HepG2 (cell line): ENCODE measurements at regions of chr7 and their contacts with region 1.

Region 1: DNA sequence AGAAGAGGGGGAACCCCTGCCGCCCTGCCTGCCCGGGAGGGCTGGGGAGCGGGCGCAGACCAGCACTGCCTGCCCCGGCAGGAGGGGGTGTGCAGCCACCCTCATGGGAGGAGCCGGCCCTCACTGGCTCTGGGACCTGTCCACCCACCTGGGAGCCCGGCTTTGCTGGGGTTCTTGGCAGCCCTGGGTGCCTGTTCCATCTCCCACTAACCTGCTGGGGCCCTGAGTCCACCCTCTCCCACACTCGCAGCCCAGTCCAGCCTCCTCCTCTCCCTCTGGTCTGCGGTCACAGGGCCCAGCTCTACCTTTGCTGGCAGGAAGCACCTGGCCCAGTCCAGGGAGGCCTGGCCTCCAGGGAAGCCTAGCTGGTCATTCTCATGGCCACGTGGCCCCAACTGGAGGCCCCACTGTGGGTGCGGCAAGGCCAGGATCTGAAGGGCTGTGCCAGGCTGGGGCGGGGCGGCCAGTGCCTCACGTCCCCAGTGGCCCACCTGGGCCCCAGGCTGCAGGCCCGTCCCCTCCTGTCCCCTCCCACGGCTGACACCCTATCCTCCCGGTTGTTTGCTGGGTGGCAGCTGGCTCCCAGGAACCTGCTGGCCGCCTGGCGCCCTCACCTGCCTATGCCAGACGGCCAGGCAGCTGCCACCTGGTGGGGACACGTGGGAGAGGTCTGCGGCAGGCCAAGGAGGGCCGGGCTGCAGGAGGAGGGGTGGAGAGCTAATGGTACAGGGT is at the start of gene TMEM184A:
- DNase-seq: peak; percentile 89
- ATAC-seq: peak; percentile 76
- H3K4me3 ChIP-seq: peak within 1 kb of the TSS; percentile 35 to 72 (median 55); a peak in 5 of 6 replicates
- H3K27ac ChIP-seq: peak within 1 kb of the TSS; percentile 89
- H3K4me1 ChIP-seq: peaks cover 54% of the 10 kb centered on the region
- H3K27me3 ChIP-seq: peaks cover 3 to 7% of the 10 kb centered on the region in 2 experiments; a peak in 2 of 5 replicates
- CTCF ChIP-seq: peak; percentile 97
- EP300 ChIP-seq: 0 out of 4 replicates have a peak, but pooled peaks of 1 of the 2 experiments have one; percentile 14
- POLR2A ChIP-seq: peak in 1 of 2 experiments; percentile 57; a peak in 2 of 4 replicates
- RAD21 ChIP-seq: peak; percentile 92
- total RNA-seq, gene TMEM184A: 3.1 and 9.5 TPM in 2 replicates

Region 2: GRCh38 chr7:1459522-1459892 is 96.5 kb before region 1 on chr7:
- CTCF ChIA-PET with region 1: no interaction called
- POLR2A ChIA-PET with region 1: interaction called, 10 read pairs
- in situ Hi-C with region 1: no loop called
- intact Hi-C with region 1: no loop called
- DNase-seq: peak; percentile 94
- ATAC-seq: peak; percentile 70
- H3K4me3 ChIP-seq: peak overlapping the region; percentile 67 to 86 (median 86); a peak in 5 of 6 replicates
- H3K27ac ChIP-seq: peak overlapping the region; percentile 64
- H3K4me1 ChIP-seq: peaks cover 73% of the 10 kb centered on the region
- H3K27me3 ChIP-seq: no peaks in the 10 kb centered on the region
- CTCF ChIP-seq: no peak
- EP300 ChIP-seq: no peak
- POLR2A ChIP-seq: no peak
- RAD21 ChIP-seq: no peak

Region 3: DNA sequence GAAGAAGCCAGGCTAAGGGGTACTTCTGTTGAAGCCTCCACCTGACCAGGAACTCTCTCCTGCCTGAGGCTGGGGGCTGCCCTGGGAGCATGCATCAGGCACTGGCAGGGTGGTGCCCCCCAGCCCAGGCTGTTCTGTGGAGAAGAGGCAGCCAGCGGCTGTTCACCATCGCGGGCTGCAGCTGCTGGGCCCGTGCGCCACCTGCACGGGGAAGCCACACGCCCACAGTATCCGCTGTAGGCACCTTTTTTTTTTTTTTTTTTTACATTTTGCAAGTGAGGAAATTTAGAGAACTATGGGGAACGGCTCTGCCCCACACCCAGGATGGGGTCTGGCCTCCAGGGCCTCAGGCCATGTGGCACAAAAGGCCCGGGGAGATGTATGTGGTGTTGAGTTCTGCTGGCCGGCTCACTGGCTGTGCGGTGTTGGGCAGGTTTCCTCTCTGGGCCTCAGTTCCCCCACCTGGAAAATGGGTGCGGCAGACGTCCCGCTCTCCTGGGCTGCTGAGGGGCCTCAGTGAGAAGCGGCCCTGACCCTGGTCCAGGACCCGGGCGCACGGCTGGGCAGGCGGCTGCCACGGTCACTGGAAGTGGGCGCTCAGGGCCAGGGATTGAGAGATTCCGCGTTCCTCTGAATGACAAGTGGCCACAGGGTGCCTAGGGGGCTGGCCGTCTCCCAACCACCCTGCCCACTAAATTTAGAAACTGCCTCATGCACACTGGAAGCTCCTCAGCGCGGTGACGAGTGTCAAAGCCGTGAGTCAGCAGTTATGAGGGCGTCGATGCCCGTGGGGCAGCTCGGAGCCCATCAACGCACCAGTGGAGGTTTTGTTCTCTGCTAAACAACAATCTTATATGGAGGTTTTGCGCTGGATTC is 43.0 kb before region 1 on chr7:
- CTCF ChIA-PET with region 1: no interaction called
- POLR2A ChIA-PET with region 1: interaction called, 30 read pairs
- in situ Hi-C with region 1: no loop called
- intact Hi-C with region 1: no loop called
- DNase-seq: no peak
- ATAC-seq: 0 out of 3 replicates have a peak, but pooled peaks have one; percentile 5
- H3K4me3 ChIP-seq: no peak overlapping the region
- H3K27ac ChIP-seq: no peak overlapping the region
- H3K4me1 ChIP-seq: peaks cover 67% of the 10 kb centered on the region
- H3K27me3 ChIP-seq: peaks cover 0 to 2% of the 10 kb centered on the region in 2 experiments; a peak in 1 of 5 replicates
- CTCF ChIP-seq: no peak
- EP300 ChIP-seq: no peak
- POLR2A ChIP-seq: no peak
- RAD21 ChIP-seq: no peak

Region 4: DNA sequence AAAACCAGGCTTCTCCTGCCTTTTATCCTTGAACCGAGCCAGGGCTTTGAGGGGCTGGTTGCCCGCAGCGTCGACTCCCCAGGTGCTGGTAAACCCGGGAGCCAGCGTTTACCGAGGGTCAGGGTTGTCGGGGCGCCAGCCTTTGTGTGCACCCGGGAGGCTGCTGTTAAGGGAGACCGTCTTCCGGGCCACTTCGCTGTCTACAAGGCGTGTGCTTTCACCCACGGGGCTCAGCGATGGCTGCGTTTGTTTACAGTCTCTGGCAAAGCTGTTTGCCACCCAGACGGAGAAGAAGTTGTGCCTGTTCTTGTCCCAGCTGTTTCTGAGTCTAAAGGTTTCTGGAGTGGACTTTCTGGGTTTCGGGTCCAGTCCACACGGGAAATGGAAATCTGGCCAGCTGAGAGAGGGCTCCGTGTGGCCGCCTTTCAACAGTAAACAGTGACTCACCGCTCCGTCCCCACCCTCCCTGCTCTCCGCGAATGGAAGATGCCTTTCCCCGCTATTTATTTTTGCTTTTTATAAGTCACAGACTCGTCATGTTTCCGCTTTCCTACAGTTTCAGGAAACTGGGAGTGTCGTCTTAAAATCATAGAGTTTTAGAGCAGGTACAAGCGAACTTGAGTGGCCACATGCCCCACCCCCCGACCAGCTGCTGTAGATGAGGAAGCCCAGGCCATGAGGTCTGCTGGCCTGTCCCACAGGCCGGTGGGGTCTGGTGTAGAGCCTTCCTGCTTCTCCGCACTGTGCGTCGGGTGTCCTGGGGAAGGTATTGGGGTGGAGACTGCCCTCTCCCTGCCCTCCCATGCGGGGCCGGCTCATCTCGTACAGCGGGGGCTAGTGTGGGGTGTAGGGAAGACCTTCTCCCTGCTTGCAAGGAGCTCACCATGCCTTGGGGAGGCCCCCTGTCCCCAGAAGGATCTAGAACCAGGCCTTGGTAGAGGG is 23.2 kb before region 1 on chr7:
- CTCF ChIA-PET with region 1: no interaction called
- POLR2A ChIA-PET with region 1: interaction called, 108 read pairs
- in situ Hi-C with region 1: no loop called
- intact Hi-C with region 1: loop called (anchors 2 kb)
- DNase-seq: peak; percentile 77
- ATAC-seq: peak; percentile 45
- H3K4me3 ChIP-seq: peak overlapping the region; percentile 60 to 86 (median 86)
- H3K27ac ChIP-seq: peak overlapping the region; percentile 81
- H3K4me1 ChIP-seq: peaks cover 69% of the 10 kb centered on the region
- H3K27me3 ChIP-seq: peaks cover 0 to 2% of the 10 kb centered on the region in 2 experiments; a peak in 1 of 5 replicates
- CTCF ChIP-seq: no peak
- EP300 ChIP-seq: 0 out of 4 replicates have a peak, but pooled peaks of 1 of the 2 experiments have one; percentile 29
- POLR2A ChIP-seq: peak in 1 of 2 experiments; percentile 25; a peak in 1 of 4 replicates
- RAD21 ChIP-seq: no peak

Region 5: DNA sequence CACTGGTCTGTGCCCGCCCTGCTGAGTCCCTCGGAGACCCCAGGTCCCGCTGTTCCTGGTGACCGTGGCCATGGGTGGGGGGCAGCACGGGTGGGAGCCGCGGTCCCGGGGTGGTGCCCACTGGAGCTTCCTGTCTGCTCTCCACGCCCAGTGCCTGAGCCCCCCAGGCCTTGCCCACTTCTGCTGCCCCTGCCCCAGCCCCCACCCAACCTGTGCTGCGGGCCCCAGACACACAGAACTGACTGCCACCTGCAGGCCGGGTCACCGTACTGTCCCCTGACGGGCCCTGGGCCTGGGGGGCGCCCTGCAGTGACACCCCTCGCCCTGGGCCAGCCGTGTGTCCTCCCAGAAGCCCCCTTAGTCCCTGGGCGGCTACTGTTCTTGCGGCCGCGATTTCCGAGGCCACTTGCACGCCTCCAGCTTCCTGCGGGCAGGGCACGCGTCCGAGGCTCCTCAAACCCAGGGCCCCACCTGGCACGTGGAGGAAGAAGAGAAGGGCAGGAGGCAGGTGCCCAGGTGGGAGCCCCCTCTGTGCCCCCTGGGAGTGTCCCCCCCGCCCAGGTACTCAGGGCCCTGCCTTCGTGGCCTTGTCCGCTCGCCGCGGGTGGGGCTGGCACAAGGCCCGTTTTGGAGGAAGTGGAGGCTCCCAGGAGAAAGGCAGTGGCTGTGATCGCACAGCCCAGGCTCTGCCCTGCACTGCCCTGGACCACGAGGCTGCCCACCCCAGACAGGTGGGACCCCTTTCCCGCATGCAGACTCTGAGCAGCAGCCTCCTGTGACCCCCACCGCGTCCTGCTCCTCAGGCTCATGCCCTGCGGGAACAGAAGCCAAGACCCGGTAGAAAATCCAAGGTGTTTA is 10.4 kb before region 1 on chr7:
- CTCF ChIA-PET with region 1: no interaction called
- POLR2A ChIA-PET with region 1: interaction called, 30 read pairs
- in situ Hi-C with region 1: no loop called
- intact Hi-C with region 1: no loop called
- DNase-seq: no peak
- ATAC-seq: peak; percentile 14; the same call in 2 of the 3 replicates
- H3K4me3 ChIP-seq: no peak overlapping the region
- H3K27ac ChIP-seq: no peak overlapping the region
- H3K4me1 ChIP-seq: no peaks in the 10 kb centered on the region
- H3K27me3 ChIP-seq: no peaks in the 10 kb centered on the region
- CTCF ChIP-seq: peak; percentile 44
- EP300 ChIP-seq: no peak
- POLR2A ChIP-seq: no peak
- RAD21 ChIP-seq: no peak